ENCODE measurements at regions of chr17 and their contacts with region 1.

Region 1: DNA sequence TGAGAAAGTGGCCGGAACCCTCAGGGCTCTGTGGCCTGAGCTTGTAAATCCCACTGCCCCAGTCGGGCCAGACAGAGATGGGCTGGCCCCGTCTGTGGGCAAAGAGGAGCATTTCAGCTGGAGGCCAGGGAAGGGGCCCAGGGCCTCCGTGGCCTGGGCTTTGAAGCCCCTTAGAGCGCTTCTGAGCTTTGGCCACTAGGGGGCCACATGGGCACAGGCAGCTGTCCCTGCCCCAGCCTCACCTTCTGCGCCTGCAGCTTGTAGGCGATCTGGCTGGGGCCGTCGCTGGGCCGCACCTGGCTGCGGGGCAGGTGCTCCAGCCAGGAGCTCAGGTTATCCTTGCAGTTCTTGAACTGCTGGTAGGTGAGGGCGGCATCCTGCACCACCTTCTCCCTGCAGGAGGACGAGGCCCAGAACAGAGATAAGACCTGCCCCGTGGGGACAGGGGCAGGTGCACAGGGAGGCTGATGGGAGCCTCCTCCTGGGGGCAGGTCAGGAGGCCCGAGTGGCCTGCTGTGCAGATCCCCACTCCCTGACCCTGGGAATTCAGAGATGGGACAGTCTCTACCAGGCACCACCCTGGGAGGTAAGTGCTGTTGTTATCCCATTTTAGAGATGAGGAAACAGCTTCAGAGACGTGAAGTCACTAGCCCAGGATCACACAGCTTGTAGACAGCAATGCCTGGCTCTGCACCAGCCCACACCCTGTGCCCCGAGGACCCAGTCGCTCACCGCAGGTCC is 12.8 kb downstream of the EVPL start:
- DNase-seq: peak; percentile 66 to 85 (median 71)
- H3K4me3 ChIP-seq: no peak overlapping the region
- H3K4me3 Mint-ChIP-seq: peak overlapping the region in 1 of 7 donors; percentile 32
- H3K27ac ChIP-seq: no peak overlapping the region
- H3K27ac Mint-ChIP-seq: peak overlapping the region in 1 of 8 donors; percentile 80
- H3K4me1 ChIP-seq: peaks cover 4% of the 10 kb centered on the region
- H3K4me1 Mint-ChIP-seq: peaks cover 5 to 6% (median 5%) of the 10 kb centered on the region in 3 donors
- H3K27me3 ChIP-seq: no peaks in the 10 kb centered on the region
- H3K27me3 Mint-ChIP-seq: peaks cover 0 to 5% of the 10 kb centered on the region in 2 donors

Region 2: DNA sequence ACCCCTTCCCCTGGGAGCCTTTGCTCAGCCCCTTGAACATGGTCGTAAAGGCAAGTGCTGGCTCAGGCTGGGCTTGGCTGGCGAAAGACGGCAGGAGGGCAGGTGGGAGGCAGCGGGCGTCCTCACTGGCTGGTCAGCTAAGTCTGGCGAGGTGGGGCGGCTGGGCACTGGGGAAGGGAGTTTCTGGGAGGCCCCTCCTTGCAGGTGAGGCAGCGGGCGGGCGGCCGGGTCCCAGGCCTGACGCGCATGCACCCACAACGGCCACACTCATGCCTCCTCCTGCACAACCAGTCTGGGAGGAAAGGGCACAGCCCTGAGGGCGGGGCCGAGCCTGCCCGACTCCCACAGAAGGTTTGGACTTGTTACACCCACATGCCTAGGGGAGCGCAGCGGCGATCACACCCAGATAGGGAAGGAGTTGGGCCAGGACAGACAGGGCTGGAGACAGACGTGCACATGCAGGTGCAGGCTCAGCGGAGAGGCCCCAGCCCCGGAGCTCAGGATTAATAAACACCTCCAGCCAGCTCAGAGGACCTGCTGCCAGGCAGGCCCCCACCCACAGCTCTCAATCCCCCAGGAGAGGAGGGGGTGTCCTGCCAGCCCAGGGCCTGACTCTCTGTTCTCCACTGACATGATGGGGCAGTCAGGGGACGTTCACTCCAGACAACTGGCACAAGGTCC is 12.9 kb after region 1 on chr17 and contains the start of gene EVPL:
- CTCF ChIA-PET with region 1: interaction called, 19 read pairs
- POLR2A ChIA-PET with region 1: interaction called, 3 read pairs
- DNase-seq: no peak
- H3K4me3 ChIP-seq: no peak within 1 kb of the TSS
- H3K4me3 Mint-ChIP-seq: no peak within 1 kb of the TSS
- H3K27ac ChIP-seq: no peak within 1 kb of the TSS
- H3K27ac Mint-ChIP-seq: peak within 1 kb of the TSS in 1 of 8 donors; percentile 17
- H3K4me1 ChIP-seq: peaks cover 17% of the 10 kb centered on the region
- H3K4me1 Mint-ChIP-seq: peaks cover 14 to 19% (median 14%) of the 10 kb centered on the region in 3 donors
- H3K27me3 ChIP-seq: no peaks in the 10 kb centered on the region
- H3K27me3 Mint-ChIP-seq: no peaks in the 10 kb centered on the region
- total RNA-seq, gene EVPL: 0.07 to 0.11 TPM

Region 3: GRCh38 chr17:76056835-76057234 is 42.5 kb after region 1 on chr17:
- CTCF ChIA-PET with region 1: interaction called, 12 read pairs
- POLR2A ChIA-PET with region 1: no interaction called
- DNase-seq: no peak
- H3K4me3 ChIP-seq: no peak overlapping the region
- H3K4me3 Mint-ChIP-seq: no peak overlapping the region
- H3K27ac ChIP-seq: no peak overlapping the region
- H3K27ac Mint-ChIP-seq: peak overlapping the region in 1 of 8 donors; percentile 52
- H3K4me1 ChIP-seq: no peaks in the 10 kb centered on the region
- H3K4me1 Mint-ChIP-seq: peaks cover 0 to 11% (median 3%) of the 10 kb centered on the region in 3 donors
- H3K27me3 ChIP-seq: no peaks in the 10 kb centered on the region
- H3K27me3 Mint-ChIP-seq: no peaks in the 10 kb centered on the region

Region 4: DNA sequence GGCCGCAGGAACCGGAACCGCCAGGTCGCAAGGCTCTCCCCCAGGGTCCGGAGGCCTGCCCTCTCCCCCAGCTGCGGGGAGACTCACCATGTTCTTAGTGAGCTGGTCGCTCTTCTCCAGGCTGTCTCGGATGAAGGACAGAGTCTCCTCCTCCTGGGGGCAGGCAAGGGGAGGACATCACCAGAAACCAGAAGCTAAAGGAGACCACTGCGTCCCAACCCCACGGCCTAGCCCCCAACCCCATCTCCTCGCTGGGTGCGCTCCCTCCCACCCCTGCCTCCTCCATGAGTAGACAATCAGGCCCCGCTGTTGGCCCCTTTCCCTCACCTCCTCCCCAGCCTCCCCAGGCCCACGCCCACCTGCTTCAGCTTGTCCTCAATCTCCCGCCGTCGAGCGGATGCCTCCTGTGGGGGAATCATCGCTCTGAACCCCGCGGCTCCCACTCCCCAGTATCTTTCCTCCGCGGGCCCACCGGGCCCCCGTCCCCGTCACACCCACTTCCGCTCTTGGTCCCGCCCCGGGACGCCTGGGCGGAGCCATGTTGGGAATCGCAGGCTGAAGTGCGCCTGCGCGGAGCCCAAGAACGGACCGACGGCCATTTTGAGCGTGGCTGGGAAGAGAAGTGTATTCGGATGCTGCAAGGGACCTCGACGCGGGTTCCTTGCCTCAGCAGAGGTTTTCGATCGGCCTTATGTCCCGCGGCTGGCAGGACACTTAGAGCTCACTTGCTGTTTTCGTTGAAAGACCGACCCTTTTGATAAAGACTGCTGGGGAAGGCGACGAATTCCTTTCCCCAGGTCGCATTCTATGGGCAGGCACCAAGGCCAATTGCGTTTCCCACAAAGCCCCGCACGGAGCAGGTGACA is 89.2 kb after region 1 on chr17 and contains the start of gene EXOC7:
- CTCF ChIA-PET with region 1: interaction called, 30 read pairs
- POLR2A ChIA-PET with region 1: interaction called, 3 read pairs
- DNase-seq: peak; percentile 89 to 95 (median 90)
- H3K4me3 ChIP-seq: peak within 1 kb of the TSS; percentile 77
- H3K4me3 Mint-ChIP-seq: peak within 1 kb of the TSS; percentile 92 to 98 (median 96)
- H3K27ac ChIP-seq: peak within 1 kb of the TSS; percentile 70
- H3K27ac Mint-ChIP-seq: peak within 1 kb of the TSS; percentile 90 to 99 (median 98)
- H3K4me1 ChIP-seq: peaks cover 17% of the 10 kb centered on the region
- H3K4me1 Mint-ChIP-seq: peaks cover 23 to 40% (median 34%) of the 10 kb centered on the region in 3 donors
- H3K27me3 ChIP-seq: no peaks in the 10 kb centered on the region
- H3K27me3 Mint-ChIP-seq: peaks cover 0 to 2% of the 10 kb centered on the region in 2 donors
- total RNA-seq, gene EXOC7: 105 to 109 TPM

Region 5: DNA sequence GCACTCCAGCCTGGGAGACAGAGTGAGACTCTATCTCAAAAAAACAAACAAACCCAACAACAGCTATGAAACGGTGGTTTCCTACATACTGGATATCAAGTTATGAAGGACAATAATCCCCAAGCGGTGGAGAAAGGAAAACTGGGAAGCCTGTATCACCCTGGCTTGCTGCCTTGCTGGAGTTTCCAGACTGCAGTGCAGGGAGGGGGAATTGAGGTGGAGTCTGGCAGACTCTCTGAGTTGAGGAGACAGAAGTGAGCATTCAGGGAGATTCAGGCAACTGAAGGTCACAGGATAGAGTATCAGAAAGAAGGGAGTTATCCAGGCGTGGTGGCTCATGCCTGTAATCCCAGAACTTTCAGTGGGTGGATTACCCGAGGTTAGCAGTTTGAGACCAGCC is 281.8 kb after region 1 on chr17:
- CTCF ChIA-PET with region 1: interaction called, 23 read pairs
- POLR2A ChIA-PET with region 1: no interaction called
- DNase-seq: no peak
- H3K4me3 ChIP-seq: no peak overlapping the region
- H3K4me3 Mint-ChIP-seq: no peak overlapping the region
- H3K27ac ChIP-seq: no peak overlapping the region
- H3K27ac Mint-ChIP-seq: no peak overlapping the region
- H3K4me1 ChIP-seq: no peaks in the 10 kb centered on the region
- H3K4me1 Mint-ChIP-seq: peaks cover 0 to 2% (median 0%) of the 10 kb centered on the region in 3 donors
- H3K27me3 ChIP-seq: no peaks in the 10 kb centered on the region
- H3K27me3 Mint-ChIP-seq: no peaks in the 10 kb centered on the region

Region 6: DNA sequence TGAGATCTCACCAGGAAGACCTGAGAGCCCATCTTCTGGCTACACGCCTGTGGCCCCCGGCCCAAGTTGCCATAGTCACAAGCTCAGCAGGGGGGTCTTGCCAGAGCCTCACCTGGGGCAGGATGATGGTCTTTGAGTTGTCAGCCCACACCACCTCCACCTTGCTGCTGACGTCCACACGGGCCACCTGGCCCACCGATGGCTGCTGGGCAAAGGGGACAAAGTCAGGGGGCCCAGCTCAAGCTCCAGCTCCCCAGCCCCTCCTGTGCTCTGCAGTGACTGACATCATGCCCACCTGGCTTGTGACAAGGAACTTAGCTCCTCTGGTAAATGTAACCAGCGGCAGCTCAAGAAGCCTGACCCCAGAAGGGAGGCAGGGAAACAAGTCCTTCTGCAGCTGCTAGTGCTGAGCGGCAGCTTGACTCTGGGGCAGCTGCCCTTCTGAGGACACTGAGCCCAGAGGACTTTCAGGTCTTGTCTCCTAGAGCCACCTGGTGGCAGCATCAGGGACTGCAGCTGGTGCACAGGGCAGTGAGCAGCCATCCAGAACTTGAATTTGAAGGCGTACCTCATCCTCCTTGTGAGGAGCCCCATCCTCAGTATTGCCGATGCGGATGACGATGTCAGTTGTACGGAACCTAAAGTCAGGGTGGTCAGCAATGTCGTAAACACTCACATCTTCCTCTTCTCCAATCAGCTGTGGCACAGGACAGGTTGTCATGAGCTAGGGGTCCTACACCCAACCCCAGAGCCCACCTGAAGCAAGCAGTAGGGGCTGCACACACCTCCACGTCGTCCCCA is 383.5 kb after region 1 on chr17:
- CTCF ChIA-PET with region 1: interaction called, 11 read pairs
- POLR2A ChIA-PET with region 1: no interaction called
- DNase-seq: peak; percentile 69 to 90 (median 76)
- H3K4me3 ChIP-seq: no peak overlapping the region
- H3K4me3 Mint-ChIP-seq: no peak overlapping the region
- H3K27ac ChIP-seq: no peak overlapping the region
- H3K27ac Mint-ChIP-seq: peak overlapping the region in 6 of 8 donors; percentile 1 to 57 (median 44)
- H3K4me1 ChIP-seq: no peaks in the 10 kb centered on the region
- H3K4me1 Mint-ChIP-seq: no peaks in the 10 kb centered on the region
- H3K27me3 ChIP-seq: no peaks in the 10 kb centered on the region
- H3K27me3 Mint-ChIP-seq: no peaks in the 10 kb centered on the region